Activated T-helper 1 cell treated with anti-CD3 and anti-CD28 coated beads, Interleukin-12 subunit alpha, Interleukin-12 subunit beta, Interleukin-2, Interleukin-4 antibody, amounts not matched to agents 30 ng/mL and 10 ng/mL and 1 ng/mL, durations not matched to agents 14 hours and 24 hours and 36 hours (primary cell): ENCODE measurements at regions of chr10 and their contacts with region 1.

Region 1: DNA sequence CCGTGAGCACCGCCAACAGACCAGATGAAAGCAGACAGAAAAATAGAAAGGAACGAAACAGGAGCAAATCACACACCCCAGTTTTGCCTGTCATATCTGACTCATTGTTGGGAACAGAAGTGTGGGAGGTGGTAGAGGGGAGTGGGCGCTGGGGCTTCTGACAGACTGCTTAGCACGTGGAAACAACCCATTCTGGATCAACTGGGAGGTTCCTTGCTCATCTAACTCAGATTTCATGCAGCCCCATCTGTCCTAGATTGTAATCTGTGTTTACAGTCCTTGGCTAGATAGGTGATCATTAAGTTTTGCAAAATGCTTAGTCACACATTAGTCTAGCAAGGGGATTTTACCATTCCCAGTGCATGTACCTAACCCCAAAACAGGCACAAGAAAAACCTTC is 154.1 kb downstream of the NRP1 start:
- DNase-seq: no peak
- H3K4me3 Mint-ChIP-seq: no peak overlapping the region
- H3K27ac Mint-ChIP-seq: no peak overlapping the region
- H3K4me1 Mint-ChIP-seq: peaks cover 15% of the 10 kb centered on the region
- H3K27me3 Mint-ChIP-seq: peaks cover 10% of the 10 kb centered on the region

Region 2: DNA sequence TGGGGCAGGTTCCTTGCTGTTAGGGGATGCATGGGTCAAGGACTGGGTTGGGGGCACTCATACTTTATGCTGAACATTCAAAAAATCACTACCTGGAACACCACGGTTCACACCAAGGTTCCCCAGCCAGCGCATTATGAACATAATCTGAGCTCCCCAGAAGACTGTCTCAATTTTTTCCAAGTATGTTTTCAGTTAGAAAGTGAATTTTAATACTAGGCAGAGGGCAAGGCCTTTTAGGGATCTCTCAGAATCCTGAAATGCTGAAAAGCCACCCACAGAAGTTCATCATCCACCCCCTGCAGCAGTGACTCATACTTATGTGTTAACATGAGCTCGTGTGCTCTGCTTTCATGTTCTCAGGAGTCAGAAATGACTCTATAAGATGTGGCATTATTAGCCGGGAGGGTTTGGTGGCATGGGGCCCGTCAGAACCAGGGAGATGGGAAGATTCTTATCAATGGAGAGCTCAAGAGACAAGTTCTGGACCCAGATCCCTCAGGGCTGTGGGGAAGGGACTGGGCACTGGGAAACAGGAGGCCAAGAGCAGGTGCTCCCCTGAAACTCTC is 37.1 kb before region 1 on chr10:
- intact Hi-C with region 1: loop called (anchors 1 kb)
- DNase-seq: peak; percentile 31
- H3K4me3 Mint-ChIP-seq: no peak overlapping the region
- H3K27ac Mint-ChIP-seq: peak overlapping the region; percentile 70
- H3K4me1 Mint-ChIP-seq: peaks cover 49% of the 10 kb centered on the region
- H3K27me3 Mint-ChIP-seq: no peaks in the 10 kb centered on the region

Region 3: GRCh38 chr10:33154590-33154989 is 25.8 kb before region 1 on chr10:
- intact Hi-C with region 1: no loop called
- DNase-seq: no peak
- H3K4me3 Mint-ChIP-seq: no peak overlapping the region
- H3K27ac Mint-ChIP-seq: peak overlapping the region; percentile 19
- H3K4me1 Mint-ChIP-seq: peaks cover 48% of the 10 kb centered on the region
- H3K27me3 Mint-ChIP-seq: peaks cover 2% of the 10 kb centered on the region

Region 4: GRCh38 chr10:33211106-33211878 is 30.9 kb after region 1 on chr10:
- intact Hi-C with region 1: loop called (anchors 1 kb)
- DNase-seq: no peak
- H3K4me3 Mint-ChIP-seq: no peak overlapping the region
- H3K27ac Mint-ChIP-seq: peak overlapping the region; percentile 76
- H3K4me1 Mint-ChIP-seq: peaks cover 30% of the 10 kb centered on the region
- H3K27me3 Mint-ChIP-seq: peaks cover 2% of the 10 kb centered on the region

Region 5: GRCh38 chr10:34710391-34710751 is 1530.0 kb after region 1 on chr10:
- intact Hi-C with region 1: no loop called
- DNase-seq: no peak
- H3K4me3 Mint-ChIP-seq: no peak overlapping the region
- H3K27ac Mint-ChIP-seq: no peak overlapping the region
- H3K4me1 Mint-ChIP-seq: peaks cover 5% of the 10 kb centered on the region
- H3K27me3 Mint-ChIP-seq: peaks cover 14% of the 10 kb centered on the region